SK-N-SH (cell line): ENCODE measurements at regions of chr18 and their contacts with region 1.

Region 1: GRCh38 chr18:42028247-42028832 is 73.3 kb downstream of the PIK3C3 start:
- DNase-seq: peak; percentile 37
- H3K4me3 ChIP-seq: no peak overlapping the region; a peak in 1 of 4 replicates
- H3K27ac ChIP-seq: no peak overlapping the region
- H3K4me1 ChIP-seq: peaks cover 0 to 2% of the 10 kb centered on the region in 2 experiments; a peak in 2 of 4 replicates
- H3K27me3 ChIP-seq: no peaks in the 10 kb centered on the region
- CTCF ChIP-seq: peak; percentile 94
- EP300 ChIP-seq: no peak
- RAD21 ChIP-seq: peak; percentile 52

Region 2: GRCh38 chr18:41985914-41986313 is 42.4 kb before region 1 on chr18:
- CTCF ChIA-PET with region 1: interaction called, 10 read pairs
- POLR2A ChIA-PET with region 1: no interaction called
- DNase-seq: no peak
- H3K4me3 ChIP-seq: no peak overlapping the region
- H3K27ac ChIP-seq: no peak overlapping the region
- H3K4me1 ChIP-seq: no peaks in the 10 kb centered on the region; a peak in 2 of 4 replicates
- H3K27me3 ChIP-seq: no peaks in the 10 kb centered on the region
- CTCF ChIP-seq: no peak
- EP300 ChIP-seq: no peak
- RAD21 ChIP-seq: no peak

Region 3: GRCh38 chr18:42005782-42006181 is 22.6 kb before region 1 on chr18:
- CTCF ChIA-PET with region 1: interaction called, 10 read pairs
- POLR2A ChIA-PET with region 1: no interaction called
- DNase-seq: no peak
- H3K4me3 ChIP-seq: no peak overlapping the region
- H3K27ac ChIP-seq: no peak overlapping the region
- H3K4me1 ChIP-seq: no peaks in the 10 kb centered on the region
- H3K27me3 ChIP-seq: no peaks in the 10 kb centered on the region
- CTCF ChIP-seq: no peak
- EP300 ChIP-seq: no peak
- RAD21 ChIP-seq: no peak

Region 4: DNA sequence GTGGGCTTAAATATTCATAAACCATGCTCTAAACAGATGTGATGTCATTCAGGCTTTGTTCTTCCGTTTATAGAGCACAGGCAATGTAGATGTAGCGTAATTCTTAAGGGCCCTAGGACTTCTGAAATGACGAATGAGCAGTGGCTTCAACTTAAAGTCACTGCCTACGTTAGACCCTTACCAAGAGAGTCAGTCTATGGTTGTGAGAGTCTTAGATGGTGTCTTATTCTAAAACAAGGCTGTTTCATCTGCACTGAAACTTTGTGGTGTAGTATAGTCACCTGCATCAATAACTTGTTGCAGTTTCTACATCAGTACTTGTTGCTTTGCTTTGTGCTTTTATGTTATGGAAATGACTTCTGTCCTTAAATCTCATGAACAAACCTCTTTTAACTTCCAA is 17.3 kb before region 1 on chr18:
- CTCF ChIA-PET with region 1: interaction called, 91 read pairs
- POLR2A ChIA-PET with region 1: no interaction called
- DNase-seq: no peak
- H3K4me3 ChIP-seq: no peak overlapping the region
- H3K27ac ChIP-seq: no peak overlapping the region
- H3K4me1 ChIP-seq: no peaks in the 10 kb centered on the region
- H3K27me3 ChIP-seq: no peaks in the 10 kb centered on the region
- CTCF ChIP-seq: no peak
- EP300 ChIP-seq: no peak
- RAD21 ChIP-seq: no peak

Region 5: DNA sequence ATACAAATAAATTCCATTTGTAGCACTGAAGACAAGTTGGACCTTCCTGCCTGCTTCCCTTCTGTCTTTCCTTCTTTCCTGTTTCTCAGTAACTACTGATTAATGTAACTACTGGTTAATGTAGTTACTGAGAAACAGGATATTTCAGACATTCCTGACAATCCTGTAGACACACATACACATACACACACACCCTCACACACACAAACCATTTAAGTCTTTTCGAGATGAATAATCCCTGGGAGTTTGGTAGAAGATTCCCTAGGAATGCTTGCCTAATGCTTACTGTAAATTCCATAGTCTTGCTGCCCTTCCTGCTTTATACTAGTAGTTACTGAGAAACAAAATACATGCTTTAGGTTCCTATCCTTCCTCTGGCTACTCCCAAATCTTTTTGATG is 10.6 kb after region 1 on chr18:
- CTCF ChIA-PET with region 1: interaction called, 54 read pairs
- POLR2A ChIA-PET with region 1: no interaction called
- DNase-seq: no peak
- H3K4me3 ChIP-seq: no peak overlapping the region
- H3K27ac ChIP-seq: peak overlapping the region; percentile 75 to 81; a peak in 3 of 4 replicates
- H3K4me1 ChIP-seq: peaks cover 3 to 15% of the 10 kb centered on the region in 2 experiments; a peak in 2 of 4 replicates
- H3K27me3 ChIP-seq: no peaks in the 10 kb centered on the region
- CTCF ChIP-seq: no peak
- EP300 ChIP-seq: peak in 1 of 2 experiments; percentile 21; a peak in 1 of 4 replicates
- RAD21 ChIP-seq: no peak

Region 6: GRCh38 chr18:43563780-43564179 is 1535.4 kb after region 1 on chr18:
- CTCF ChIA-PET with region 1: interaction called, 15 read pairs
- POLR2A ChIA-PET with region 1: no interaction called
- DNase-seq: peak; percentile 40
- H3K4me3 ChIP-seq: no peak overlapping the region
- H3K27ac ChIP-seq: no peak overlapping the region
- H3K4me1 ChIP-seq: no peaks in the 10 kb centered on the region; a peak in 1 of 4 replicates
- H3K27me3 ChIP-seq: no peaks in the 10 kb centered on the region
- CTCF ChIP-seq: peak; percentile 67
- EP300 ChIP-seq: no peak
- RAD21 ChIP-seq: peak; percentile 96